Adrenal gland (tissue), 19 donors: ENCODE measurements at regions of chr19 and their contacts with region 1.

Region 1: DNA sequence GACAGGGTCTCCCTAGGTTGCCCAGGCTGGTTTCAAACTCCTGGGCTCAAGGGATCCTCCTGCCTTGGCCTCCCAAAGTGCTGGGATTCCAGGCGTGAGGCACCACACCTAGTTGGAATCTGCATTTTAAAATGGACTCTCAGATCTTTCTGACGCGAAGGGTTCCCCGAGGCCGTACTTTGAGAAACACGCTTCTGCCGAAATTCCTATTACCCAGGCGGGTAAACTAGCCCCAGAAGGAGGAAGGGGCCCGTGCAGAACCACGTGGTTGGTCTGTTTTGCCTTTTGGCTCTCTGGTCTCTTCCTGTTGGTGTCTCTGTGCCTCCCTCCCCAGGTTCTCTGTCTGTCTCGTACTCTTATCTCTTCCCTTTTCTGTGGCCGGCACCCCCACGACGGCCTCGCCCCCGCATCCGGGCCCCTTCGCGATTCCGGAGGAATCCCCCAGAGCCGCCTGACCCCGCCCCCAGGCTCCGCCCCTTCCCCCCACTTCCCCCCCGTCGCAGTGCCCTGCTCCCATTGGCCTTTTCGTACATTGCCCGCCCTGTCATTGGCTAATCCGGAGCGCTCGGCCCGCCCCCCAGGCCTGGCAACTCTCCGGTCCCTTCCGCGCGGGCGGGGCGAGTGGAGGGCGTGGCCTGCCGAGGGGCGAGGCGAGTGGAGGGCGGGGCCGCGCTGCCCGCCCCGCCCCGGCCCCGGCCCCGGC is at the start of gene TNFAIP8L1:
- DNase-seq: peak; percentile 96 to 97 (median 97)
- H3K4me3 ChIP-seq: peak within 1 kb of the TSS in 3 of 4 donors; percentile 22 to 65 (median 45)
- H3K27ac ChIP-seq: peak within 1 kb of the TSS in 3 of 5 donors; percentile 48 to 67 (median 67)
- H3K4me1 ChIP-seq: peaks cover 10 to 24% of the 10 kb centered on the region in 2 donors
- H3K27me3 ChIP-seq: no peaks in the 10 kb centered on the region
- CTCF ChIP-seq: no peak
- POLR2A ChIP-seq: no peak
- total RNA-seq, gene TNFAIP8L1: 2.6 to 8.1 (median 5.4) TPM

Region 2: DNA sequence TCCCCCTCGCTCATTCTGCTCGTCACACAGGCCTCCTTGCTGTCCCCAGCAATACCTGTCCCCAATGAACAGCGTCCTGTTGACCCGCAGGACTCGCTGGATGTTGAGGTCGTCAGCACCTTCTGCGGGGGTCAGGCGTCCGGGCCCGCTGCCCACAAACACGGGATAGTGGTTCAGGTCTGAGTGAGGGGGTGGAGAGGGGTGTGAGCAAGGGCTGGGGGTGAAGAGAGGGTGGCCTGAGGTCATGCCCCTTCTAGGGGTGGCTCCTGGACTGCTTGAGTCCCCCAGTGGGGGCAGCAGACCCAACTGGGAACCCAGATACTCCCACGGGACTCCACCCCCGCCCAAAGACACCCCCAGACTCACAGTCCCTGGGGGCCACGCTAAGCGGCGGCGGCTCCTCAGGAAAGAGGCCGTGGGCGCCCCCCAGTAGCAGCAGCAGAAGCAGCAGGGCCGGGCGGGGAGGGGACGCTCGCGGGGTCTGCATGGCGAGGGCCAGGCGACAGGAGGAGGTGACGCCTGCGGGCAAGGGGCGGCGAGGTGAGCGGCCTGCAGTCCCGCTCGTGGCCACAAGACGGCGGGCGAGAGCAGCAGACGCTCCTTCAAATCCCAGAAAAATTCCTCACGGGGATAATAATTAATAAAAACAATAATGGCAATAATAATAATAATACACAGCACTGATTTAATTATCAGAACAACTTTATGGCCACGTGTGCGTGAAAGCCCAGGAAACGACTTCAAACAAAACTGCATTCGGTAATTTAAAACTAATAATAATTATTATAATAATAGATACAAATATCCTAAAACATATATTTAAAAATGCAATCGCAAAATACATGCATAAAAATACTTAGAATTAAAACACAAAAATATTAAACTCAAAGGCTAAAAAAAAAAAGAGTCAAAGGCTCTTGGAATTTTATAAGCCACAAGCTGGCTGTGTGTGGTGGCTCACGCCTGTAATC is 80.7 kb before region 1 on chr19:
- intact Hi-C with region 1: loop called in 1 of 2 experiments (anchors 5 kb)
- DNase-seq: peak in 3 of 7 donors; percentile 17 to 51 (median 44)
- H3K4me3 ChIP-seq: peak overlapping the region in 1 of 4 donors; percentile 38
- H3K27ac ChIP-seq: peak overlapping the region in 2 of 5 donors; percentile 9 to 17
- H3K4me1 ChIP-seq: peaks cover 0 to 15% of the 10 kb centered on the region in 2 donors
- H3K27me3 ChIP-seq: no peaks in the 10 kb centered on the region
- CTCF ChIP-seq: peak; percentile 82 to 100 (median 92)
- POLR2A ChIP-seq: no peak

Region 3: DNA sequence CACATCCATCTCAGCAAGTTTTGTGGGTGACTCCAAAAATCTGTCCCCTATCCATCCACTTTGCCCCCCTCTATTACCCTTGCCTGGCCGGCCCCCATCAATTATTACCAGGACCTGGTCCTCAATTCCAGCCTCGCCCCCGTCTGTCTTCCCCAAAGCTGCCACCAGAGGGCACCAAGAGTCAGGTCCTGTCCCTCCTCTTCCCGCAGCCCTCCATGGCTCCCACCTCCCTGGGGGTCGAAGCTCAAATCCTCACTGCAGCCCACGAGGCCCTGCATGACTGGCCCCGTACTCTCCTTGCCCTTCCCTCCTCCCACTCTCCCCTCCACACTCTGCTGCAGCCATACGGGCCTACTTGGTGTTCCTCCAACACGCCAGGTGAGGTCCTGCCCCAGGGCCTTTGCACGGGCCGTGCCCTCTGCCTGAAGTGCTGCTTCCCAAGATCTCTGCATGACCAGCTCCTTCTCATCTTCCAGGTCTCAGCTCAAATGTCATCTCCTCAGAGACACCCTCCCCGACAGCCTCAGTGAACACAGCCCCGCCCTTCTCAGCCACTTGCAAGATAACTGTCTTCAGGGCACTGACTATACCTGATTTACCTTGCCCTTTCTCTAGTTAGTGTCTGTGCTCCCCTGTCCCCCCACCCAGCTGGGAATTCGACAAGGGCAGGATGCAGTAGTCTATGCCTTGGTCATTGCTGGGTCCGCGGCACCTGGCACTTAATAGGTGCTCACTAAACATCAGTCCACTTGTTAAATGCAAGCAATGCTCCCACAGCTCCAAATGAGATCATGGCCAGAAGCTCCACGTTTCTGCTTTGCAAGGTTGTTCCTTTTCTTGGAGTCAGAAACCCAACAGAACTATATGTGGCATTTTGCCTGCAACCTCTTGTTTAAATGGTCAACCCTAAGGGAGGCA is 62.7 kb before region 1 on chr19:
- intact Hi-C with region 1: loop called (anchors 5 kb)
- DNase-seq: peak; percentile 54 to 86 (median 73)
- H3K4me3 ChIP-seq: no peak overlapping the region
- H3K27ac ChIP-seq: peak overlapping the region in 3 of 5 donors; percentile 37 to 70 (median 65)
- H3K4me1 ChIP-seq: peaks cover 0 to 11% of the 10 kb centered on the region in 2 donors
- H3K27me3 ChIP-seq: no peaks in the 10 kb centered on the region
- CTCF ChIP-seq: peak; percentile 51 to 90 (median 70)
- POLR2A ChIP-seq: no peak